Activated CD8-positive, alpha-beta memory T cell treated with anti-CD3 and anti-CD28 coated beads, Interleukin-2, amount 10 ng/mL, durations not matched to agents 7 days and 5 days (primary cell): ENCODE measurements at regions of chr6 and their contacts with region 1.

Region 1: GRCh38 chr6:33711140-33712129 is at the start of gene UQCC2:
- DNase-seq: peak; percentile 99
- ATAC-seq: peak; percentile 99
- H3K4me3 Mint-ChIP-seq: peak within 1 kb of the TSS; percentile 90
- H3K27ac Mint-ChIP-seq: peak within 1 kb of the TSS; percentile 96
- H3K4me1 Mint-ChIP-seq: peaks cover 42% of the 10 kb centered on the region
- H3K27me3 Mint-ChIP-seq: peaks cover 6% of the 10 kb centered on the region
- total RNA-seq, gene UQCC2: 94.8 to 108 TPM

Region 2: GRCh38 chr6:33469661-33470060 is 241.8 kb before region 1 on chr6:
- CTCF ChIA-PET with region 1: no interaction called
- DNase-seq: no peak
- ATAC-seq: no peak
- H3K4me3 Mint-ChIP-seq: no peak overlapping the region
- H3K27ac Mint-ChIP-seq: no peak overlapping the region
- H3K4me1 Mint-ChIP-seq: no peaks in the 10 kb centered on the region
- H3K27me3 Mint-ChIP-seq: peaks cover 8% of the 10 kb centered on the region

Region 3: GRCh38 chr6:33481189-33481588 is 230.2 kb before region 1 on chr6:
- CTCF ChIA-PET with region 1: no interaction called
- DNase-seq: no peak
- ATAC-seq: no peak
- H3K4me3 Mint-ChIP-seq: no peak overlapping the region
- H3K27ac Mint-ChIP-seq: no peak overlapping the region
- H3K4me1 Mint-ChIP-seq: no peaks in the 10 kb centered on the region
- H3K27me3 Mint-ChIP-seq: peaks cover 17% of the 10 kb centered on the region

Region 4: DNA sequence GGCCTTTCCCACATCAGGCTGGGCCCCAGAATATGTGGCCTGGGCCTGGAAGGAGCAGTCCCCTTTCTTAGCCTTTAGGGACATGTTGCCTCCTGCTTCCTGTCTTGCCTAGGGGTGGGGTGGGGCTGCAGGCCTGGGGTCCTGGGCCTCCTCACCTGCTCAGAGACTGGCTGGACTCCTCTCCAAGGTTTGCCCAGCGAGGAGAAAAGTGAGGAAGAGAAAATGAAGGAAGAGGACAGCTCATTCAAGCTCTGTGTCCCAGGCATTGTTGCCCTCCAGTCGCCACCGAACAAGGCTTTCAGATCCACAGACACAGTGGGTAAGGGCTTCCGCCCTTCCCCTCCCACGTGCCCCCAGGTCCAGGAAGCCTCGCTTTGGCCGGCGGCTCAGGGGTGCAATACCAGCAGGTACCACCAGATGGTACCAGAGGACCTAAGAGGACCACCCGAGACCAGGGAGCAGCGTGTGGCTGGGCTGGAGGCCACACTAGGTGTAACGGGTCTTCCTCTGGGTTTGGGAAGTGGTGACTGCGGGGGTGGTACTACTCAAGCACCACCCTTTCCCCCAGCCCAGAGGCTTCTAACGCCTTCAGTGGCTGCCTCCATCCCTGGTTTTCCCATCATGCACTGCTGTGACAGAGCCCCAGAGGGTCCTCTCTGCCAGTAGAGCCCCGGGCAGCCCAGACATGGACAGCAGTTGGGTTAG is 125.9 kb before region 1 on chr6:
- CTCF ChIA-PET with region 1: interaction called, 12 read pairs
- DNase-seq: peak; percentile 96
- ATAC-seq: peak; percentile 89
- H3K4me3 Mint-ChIP-seq: peak overlapping the region; percentile 75
- H3K27ac Mint-ChIP-seq: peak overlapping the region; percentile 94
- H3K4me1 Mint-ChIP-seq: peaks cover 37% of the 10 kb centered on the region
- H3K27me3 Mint-ChIP-seq: no peaks in the 10 kb centered on the region

Region 5: GRCh38 chr6:33679761-33680160 is 31.7 kb before region 1 on chr6:
- CTCF ChIA-PET with region 1: no interaction called
- DNase-seq: no peak
- ATAC-seq: no peak
- H3K4me3 Mint-ChIP-seq: no peak overlapping the region
- H3K27ac Mint-ChIP-seq: no peak overlapping the region
- H3K4me1 Mint-ChIP-seq: peaks cover 18% of the 10 kb centered on the region
- H3K27me3 Mint-ChIP-seq: no peaks in the 10 kb centered on the region

Region 6: GRCh38 chr6:33694401-33694931 is 17.0 kb before region 1 on chr6:
- CTCF ChIA-PET with region 1: interaction called, 15 read pairs
- DNase-seq: peak; percentile 63
- ATAC-seq: peak; percentile 40
- H3K4me3 Mint-ChIP-seq: no peak overlapping the region
- H3K27ac Mint-ChIP-seq: peak overlapping the region; percentile 84
- H3K4me1 Mint-ChIP-seq: peaks cover 69% of the 10 kb centered on the region
- H3K27me3 Mint-ChIP-seq: no peaks in the 10 kb centered on the region

Region 7: DNA sequence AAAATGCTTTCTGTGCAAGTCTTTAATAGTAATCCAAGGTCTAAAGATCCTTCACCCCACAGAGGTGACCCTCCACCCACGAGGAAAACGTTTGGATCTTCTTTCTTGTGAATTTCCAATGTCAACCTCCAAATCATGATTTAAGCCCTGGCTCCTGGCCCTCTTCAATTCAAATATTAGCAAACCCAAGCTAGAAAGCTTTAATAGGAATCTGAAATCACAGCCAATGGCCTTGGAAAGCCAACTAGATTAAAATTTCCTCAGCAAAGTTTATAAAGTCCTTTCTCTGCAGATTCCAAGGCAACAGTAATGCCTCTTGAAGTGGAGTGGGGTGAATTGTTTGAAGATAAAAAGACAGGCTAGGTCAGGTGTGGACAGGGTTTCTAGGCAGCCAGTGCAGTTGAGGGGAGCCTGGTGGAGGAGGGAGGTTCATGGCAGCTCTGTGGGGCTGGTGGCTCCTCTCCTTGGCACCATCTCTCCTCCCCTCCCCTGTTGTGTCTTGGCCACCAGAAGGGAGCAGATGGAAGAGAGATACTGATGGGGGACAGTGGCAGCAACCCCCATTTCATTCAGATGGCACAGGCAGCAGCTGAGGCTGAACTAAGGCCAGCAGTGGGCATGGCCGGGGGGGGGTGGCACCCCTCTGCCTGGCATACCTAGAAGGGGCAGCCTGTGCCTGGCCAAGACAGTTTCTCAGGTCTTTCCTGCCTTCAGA is 12.1 kb after region 1 on chr6:
- CTCF ChIA-PET with region 1: interaction called, 30 read pairs
- DNase-seq: no peak
- ATAC-seq: no peak
- H3K4me3 Mint-ChIP-seq: no peak overlapping the region
- H3K27ac Mint-ChIP-seq: no peak overlapping the region
- H3K4me1 Mint-ChIP-seq: no peaks in the 10 kb centered on the region
- H3K27me3 Mint-ChIP-seq: peaks cover 58% of the 10 kb centered on the region

Region 8: DNA sequence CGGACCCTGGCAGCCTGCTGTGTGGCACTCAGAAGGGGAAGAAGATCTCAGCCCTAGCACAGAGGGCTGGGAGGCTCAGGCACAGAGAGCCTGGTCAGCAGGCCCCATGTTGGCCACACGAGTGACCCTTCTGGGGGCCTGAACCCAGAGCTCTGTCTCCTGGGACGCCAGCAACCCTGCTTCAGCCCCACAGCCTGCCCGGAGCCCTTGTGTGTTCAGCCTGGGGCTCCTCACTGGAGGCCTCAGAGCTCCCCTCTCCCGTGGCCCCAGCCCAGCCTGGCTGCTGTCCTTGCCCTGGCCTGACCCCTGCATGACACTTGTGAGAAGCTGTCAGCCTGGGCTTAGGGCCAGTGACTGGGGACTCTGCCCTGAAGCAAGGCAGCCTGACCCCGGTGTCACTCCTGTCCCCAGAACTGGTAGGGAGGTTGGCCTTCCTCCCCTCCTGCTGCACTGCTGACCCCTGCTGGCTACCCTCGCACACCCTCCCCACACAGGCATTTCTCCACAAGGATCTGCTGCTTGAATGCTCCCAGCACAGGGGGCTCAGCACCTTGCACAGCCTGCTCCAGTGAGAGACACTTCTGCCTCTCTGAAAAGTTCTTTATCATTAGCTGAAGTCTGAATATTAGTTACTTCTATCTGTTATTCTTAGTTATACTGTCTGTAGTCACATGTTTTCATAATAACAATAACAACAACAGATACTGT is 50.6 kb after region 1 on chr6:
- CTCF ChIA-PET with region 1: interaction called, 19 read pairs
- DNase-seq: peak; percentile 70
- ATAC-seq: peak; percentile 71
- H3K4me3 Mint-ChIP-seq: no peak overlapping the region
- H3K27ac Mint-ChIP-seq: no peak overlapping the region
- H3K4me1 Mint-ChIP-seq: peaks cover 5% of the 10 kb centered on the region
- H3K27me3 Mint-ChIP-seq: peaks cover 2% of the 10 kb centered on the region